Aorta (tissue), 5 donors: ENCODE measurements at regions of chr2 and their contacts with region 1.

Region 1: DNA sequence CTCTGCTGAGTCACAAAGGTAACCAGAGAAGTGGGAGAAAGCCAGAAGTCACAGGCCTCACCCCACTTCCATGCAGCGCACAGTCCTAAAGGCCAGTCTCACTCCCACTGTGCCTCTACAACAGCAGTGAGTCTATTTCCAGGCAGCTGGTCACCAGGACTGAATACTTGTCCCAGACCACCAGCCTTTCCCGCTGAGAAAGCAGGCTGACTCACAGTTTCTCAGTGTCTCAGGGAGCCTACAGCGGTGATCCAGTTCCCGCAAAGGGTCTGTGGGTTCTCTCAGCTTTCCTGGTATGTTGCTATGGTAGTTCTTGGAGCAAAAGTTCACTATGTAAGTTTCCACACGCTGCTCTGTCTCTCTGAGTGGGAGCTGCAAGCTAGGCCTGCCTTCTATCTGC is 622.5 kb downstream of the RNF144A start:
- DNase-seq: no peak
- ATAC-seq: no peak
- H3K4me3 ChIP-seq: no peak overlapping the region
- H3K27ac ChIP-seq: no peak overlapping the region
- H3K4me1 ChIP-seq: no peaks in the 10 kb centered on the region
- H3K27me3 ChIP-seq: no peaks in the 10 kb centered on the region

Region 2: GRCh38 chr2:7437716-7438632 is 101.8 kb before region 1 on chr2:
- intact Hi-C with region 1: no loop called
- DNase-seq: no peak
- ATAC-seq: no peak
- H3K4me3 ChIP-seq: no peak overlapping the region
- H3K27ac ChIP-seq: no peak overlapping the region
- H3K4me1 ChIP-seq: no peaks in the 10 kb centered on the region
- H3K27me3 ChIP-seq: no peaks in the 10 kb centered on the region

Region 3: GRCh38 chr2:7559791-7560190 is 20.0 kb after region 1 on chr2:
- intact Hi-C with region 1: loop called in 1 of 2 experiments (anchors 2 kb)
- DNase-seq: no peak
- ATAC-seq: no peak
- H3K4me3 ChIP-seq: no peak overlapping the region
- H3K27ac ChIP-seq: no peak overlapping the region
- H3K4me1 ChIP-seq: no peaks in the 10 kb centered on the region
- H3K27me3 ChIP-seq: no peaks in the 10 kb centered on the region

Region 4: GRCh38 chr2:7649461-7650228 is 109.9 kb after region 1 on chr2:
- intact Hi-C with region 1: no loop called
- DNase-seq: no peak
- ATAC-seq: no peak
- H3K4me3 ChIP-seq: no peak overlapping the region
- H3K27ac ChIP-seq: no peak overlapping the region
- H3K4me1 ChIP-seq: no peaks in the 10 kb centered on the region
- H3K27me3 ChIP-seq: no peaks in the 10 kb centered on the region

Region 5: GRCh38 chr2:7692657-7693161 is 152.9 kb after region 1 on chr2:
- intact Hi-C with region 1: no loop called
- DNase-seq: peak; percentile 50 to 79
- ATAC-seq: peak; percentile 56
- H3K4me3 ChIP-seq: no peak overlapping the region
- H3K27ac ChIP-seq: no peak overlapping the region
- H3K4me1 ChIP-seq: no peaks in the 10 kb centered on the region
- H3K27me3 ChIP-seq: no peaks in the 10 kb centered on the region